ENCODE measurements at regions of chr9 and their contacts with region 1.

Region 1: GRCh38 chr9:134707031-134707680 is 65.6 kb downstream of the COL5A1 start:
- DNase-seq: peak; percentile 79 to 90 (median 87)
- ATAC-seq: peak; percentile 62 to 81 (median 66)
- H3K4me3 ChIP-seq: no peak overlapping the region
- H3K27ac ChIP-seq: peak overlapping the region; percentile 23 to 92 (median 72)
- H3K4me1 ChIP-seq: peaks cover 0 to 76% (median 28%) of the 10 kb centered on the region in 12 donors
- H3K27me3 ChIP-seq: no peaks in the 10 kb centered on the region
- CTCF ChIP-seq: no peak
- POLR2A ChIP-seq: no peak

Region 2: DNA sequence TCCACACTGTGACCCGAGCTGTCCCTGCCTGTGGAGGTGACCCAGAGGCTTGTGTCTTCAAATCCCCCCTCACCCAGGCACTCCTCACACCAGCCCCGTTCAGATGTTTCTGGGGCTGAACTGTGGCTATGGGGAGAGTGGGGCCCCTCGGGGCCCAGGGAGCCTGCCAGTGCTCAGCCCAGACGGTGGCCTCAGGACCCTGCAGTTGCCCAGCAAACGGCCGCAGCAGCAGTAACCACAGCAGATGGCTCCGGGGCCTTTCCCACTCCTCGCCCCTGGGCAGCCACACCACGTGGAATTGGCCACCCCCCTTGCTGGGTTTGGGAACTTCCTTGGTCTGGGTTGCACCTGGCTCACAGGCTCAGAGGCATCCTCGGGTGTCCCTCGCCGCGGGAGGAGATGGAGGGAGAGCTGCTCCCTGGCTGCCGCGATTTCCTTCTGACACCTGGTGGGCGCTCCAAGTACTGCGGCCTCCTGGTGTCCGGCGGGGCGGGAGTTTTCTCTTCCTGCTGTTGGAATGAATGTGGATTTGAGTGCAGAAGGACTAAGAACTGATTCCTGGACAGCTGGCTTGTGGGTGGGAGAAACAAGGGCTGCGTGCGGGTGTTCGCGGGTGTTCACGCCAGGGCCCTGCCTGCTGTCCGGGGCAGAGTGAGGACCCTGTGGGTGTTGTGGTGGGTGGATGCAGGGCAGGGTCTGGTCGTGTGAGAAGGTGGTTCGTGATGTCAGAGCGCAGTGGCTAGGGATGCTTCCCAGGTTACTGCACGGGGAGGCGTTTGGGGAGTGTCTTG is 31.9 kb after region 1 on chr9:
- intact Hi-C with region 1: loop called in 2 of 10 experiments (anchors 5 kb)
- DNase-seq: peak; percentile 61 to 87 (median 79)
- ATAC-seq: peak; percentile 16 to 64 (median 49)
- H3K4me3 ChIP-seq: no peak overlapping the region
- H3K27ac ChIP-seq: no peak overlapping the region
- H3K4me1 ChIP-seq: peaks cover 0 to 39% (median 11%) of the 10 kb centered on the region in 12 donors
- H3K27me3 ChIP-seq: no peaks in the 10 kb centered on the region
- CTCF ChIP-seq: peak; percentile 81 to 93 (median 92)
- POLR2A ChIP-seq: no peak

Region 3: GRCh38 chr9:134983074-134983473 is 275.9 kb after region 1 on chr9:
- intact Hi-C with region 1: loop called in 3 of 10 experiments (anchors 5 to 10 kb)
- DNase-seq: peak in 3 of 5 donors; percentile 37 to 78 (median 53)
- ATAC-seq: peak; percentile 31 to 49 (median 40)
- H3K4me3 ChIP-seq: no peak overlapping the region
- H3K27ac ChIP-seq: no peak overlapping the region
- H3K4me1 ChIP-seq: no peaks in the 10 kb centered on the region
- H3K27me3 ChIP-seq: peaks cover 0 to 5% (median 0%) of the 10 kb centered on the region in 9 donors
- CTCF ChIP-seq: peak; percentile 33 to 63 (median 52)
- POLR2A ChIP-seq: no peak